Activated CD8-positive, alpha-beta T cell treated with anti-CD3 and anti-CD28 coated beads, Interleukin-2, amount 10 ng/mL, durations not matched to agents 7 days and 5 days (primary cell): ENCODE measurements at regions of chr1 and their contacts with region 1.

Region 1: GRCh38 chr1:101520302-101520701 is 283.5 kb downstream of the S1PR1 start:
- DNase-seq: peak; percentile 39
- ATAC-seq: no peak
- H3K4me3 Mint-ChIP-seq: no peak overlapping the region
- H3K27ac Mint-ChIP-seq: no peak overlapping the region
- H3K4me1 Mint-ChIP-seq: peaks cover 6% of the 10 kb centered on the region
- H3K27me3 Mint-ChIP-seq: peaks cover 12% of the 10 kb centered on the region

Region 2: DNA sequence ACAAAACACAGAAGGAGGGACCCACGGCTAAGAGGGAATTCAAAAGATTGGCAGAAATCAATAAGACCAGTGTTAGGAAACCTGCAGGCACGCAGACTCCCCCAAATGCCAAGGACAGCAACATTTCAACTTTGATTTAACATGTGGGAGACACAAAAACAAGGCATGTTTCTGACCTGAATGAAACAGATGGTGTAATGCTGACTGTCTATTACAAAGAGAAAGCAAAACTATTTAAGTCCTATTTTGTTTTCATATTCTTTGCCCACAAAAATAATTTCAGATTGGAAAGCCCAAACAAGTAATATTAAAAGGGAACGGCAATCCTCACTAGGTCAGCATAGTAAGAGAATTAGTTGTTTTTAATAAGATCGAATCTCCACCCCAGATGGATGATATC is 175.6 kb before region 1 on chr1:
- CTCF ChIA-PET with region 1: no interaction called
- POLR2A ChIA-PET with region 1: no interaction called
- DNase-seq: no peak
- ATAC-seq: no peak
- H3K4me3 Mint-ChIP-seq: no peak overlapping the region
- H3K27ac Mint-ChIP-seq: no peak overlapping the region
- H3K4me1 Mint-ChIP-seq: peaks cover 38% of the 10 kb centered on the region
- H3K27me3 Mint-ChIP-seq: no peaks in the 10 kb centered on the region

Region 3: DNA sequence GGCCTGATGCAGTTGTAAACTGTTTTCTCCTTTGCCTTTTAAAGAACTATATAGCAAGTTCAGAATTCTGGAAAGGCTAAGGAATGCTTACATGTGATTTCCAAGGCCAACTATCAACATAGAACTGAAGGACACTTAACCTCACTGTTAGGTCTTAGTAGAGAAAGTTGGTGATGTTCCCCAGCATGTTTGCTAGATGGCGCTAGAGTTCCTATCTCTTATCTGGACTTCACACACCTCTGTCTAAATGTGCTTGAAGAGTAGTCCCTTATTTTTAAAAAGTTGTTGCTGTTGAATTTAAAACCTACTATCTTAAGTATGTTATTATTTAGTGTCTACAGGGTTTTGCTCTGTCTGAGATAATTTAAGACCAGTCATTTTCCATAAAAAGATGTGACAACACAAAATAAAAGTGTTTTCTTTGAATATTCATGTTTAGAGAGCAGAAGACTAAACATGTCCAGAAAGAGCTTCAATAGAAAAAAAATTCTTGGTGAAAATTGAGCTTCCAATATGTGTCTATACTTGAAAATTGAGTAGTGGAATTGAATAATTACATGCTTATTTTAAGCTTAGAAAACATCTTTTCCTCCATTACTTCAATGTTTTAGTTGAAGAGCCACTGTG is 46.1 kb before region 1 on chr1:
- CTCF ChIA-PET with region 1: interaction called, 10 read pairs
- POLR2A ChIA-PET with region 1: no interaction called
- DNase-seq: no peak
- ATAC-seq: no peak
- H3K4me3 Mint-ChIP-seq: no peak overlapping the region
- H3K27ac Mint-ChIP-seq: no peak overlapping the region
- H3K4me1 Mint-ChIP-seq: peaks cover 9% of the 10 kb centered on the region
- H3K27me3 Mint-ChIP-seq: no peaks in the 10 kb centered on the region

Region 4: GRCh38 chr1:101506541-101507164 is 13.6 kb before region 1 on chr1:
- CTCF ChIA-PET with region 1: interaction called, 52 read pairs
- POLR2A ChIA-PET with region 1: no interaction called
- DNase-seq: peak; percentile 62
- ATAC-seq: peak; percentile 57
- H3K4me3 Mint-ChIP-seq: no peak overlapping the region
- H3K27ac Mint-ChIP-seq: no peak overlapping the region
- H3K4me1 Mint-ChIP-seq: no peaks in the 10 kb centered on the region
- H3K27me3 Mint-ChIP-seq: peaks cover 14% of the 10 kb centered on the region

Region 5: DNA sequence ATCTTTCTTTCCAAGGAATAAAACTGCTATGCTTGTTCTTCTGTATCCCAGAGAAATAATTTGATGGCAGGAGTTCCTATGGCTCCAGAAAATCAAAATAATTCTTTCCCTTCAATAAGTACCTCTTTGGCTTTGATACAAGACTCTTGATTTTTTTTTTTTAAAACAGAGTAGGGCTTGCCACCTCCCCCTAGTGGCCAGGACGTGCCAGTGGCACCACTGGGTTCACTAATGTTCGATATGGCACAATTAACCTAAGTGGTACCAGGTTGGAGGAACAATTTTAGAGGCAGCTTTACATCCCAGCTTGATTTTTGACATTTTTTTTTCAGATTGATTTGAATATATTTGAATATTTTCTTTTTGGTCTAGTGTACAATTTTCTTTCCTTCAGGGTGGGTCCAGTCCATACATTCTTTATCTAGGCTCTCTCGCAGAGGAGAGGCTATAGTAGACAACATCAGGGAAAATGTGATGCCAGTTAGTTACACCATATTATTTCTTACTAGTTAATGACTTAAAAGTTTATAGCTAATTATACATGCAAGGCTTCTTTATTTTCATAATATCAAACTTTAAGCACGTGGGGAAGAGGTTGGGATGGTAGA is 47.4 kb after region 1 on chr1:
- CTCF ChIA-PET with region 1: interaction called, 23 read pairs
- POLR2A ChIA-PET with region 1: no interaction called
- DNase-seq: peak; percentile 59
- ATAC-seq: peak; percentile 85
- H3K4me3 Mint-ChIP-seq: no peak overlapping the region
- H3K27ac Mint-ChIP-seq: no peak overlapping the region
- H3K4me1 Mint-ChIP-seq: peaks cover 3% of the 10 kb centered on the region
- H3K27me3 Mint-ChIP-seq: peaks cover 11% of the 10 kb centered on the region